Posterior vena cava (tissue), 2 donors: ENCODE measurements at regions of chr9 and their contacts with region 1.

Region 1: DNA sequence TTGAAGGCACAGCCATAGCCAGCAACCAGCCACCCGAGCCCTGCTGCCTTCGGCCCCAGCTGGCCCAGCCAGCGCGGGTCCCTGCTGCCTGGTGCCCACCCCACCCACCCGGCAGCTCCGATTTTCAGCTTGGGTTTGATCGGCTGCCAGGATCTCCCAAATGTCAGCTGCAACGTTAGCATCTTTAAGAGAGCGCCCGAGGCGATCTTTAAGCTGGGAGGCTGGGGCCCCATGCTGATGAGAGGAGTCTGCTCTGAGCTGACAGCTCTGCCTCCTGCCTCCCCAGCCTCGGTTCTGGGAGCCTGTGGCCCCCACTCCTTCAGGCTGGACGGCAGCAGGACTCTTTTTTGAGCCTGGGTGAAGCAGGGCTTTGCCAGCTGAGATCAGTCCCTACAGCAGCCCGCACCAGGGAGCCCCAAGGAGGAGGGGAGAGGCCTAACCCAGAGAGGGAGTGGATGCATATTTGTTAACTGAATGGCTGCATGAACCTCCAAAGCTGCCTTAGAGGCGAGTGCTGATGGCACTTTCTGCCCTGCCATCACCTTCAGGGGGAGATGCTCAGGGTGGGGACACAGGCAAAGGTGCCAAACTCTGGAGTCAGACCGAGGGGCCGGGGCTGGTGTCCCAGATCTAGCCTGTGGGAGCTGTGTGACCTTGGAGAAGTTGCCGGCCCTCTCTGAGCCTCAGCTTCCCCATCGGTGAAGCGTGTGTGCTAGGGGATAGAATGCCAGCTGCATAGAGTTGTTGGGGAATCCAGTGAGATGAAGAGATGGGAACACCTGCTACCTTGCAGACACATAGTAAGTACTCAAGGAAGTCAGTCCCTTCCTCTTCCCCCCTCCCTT is 165.5 kb downstream of the C9orf50 start:
- DNase-seq: no peak

Region 2: DNA sequence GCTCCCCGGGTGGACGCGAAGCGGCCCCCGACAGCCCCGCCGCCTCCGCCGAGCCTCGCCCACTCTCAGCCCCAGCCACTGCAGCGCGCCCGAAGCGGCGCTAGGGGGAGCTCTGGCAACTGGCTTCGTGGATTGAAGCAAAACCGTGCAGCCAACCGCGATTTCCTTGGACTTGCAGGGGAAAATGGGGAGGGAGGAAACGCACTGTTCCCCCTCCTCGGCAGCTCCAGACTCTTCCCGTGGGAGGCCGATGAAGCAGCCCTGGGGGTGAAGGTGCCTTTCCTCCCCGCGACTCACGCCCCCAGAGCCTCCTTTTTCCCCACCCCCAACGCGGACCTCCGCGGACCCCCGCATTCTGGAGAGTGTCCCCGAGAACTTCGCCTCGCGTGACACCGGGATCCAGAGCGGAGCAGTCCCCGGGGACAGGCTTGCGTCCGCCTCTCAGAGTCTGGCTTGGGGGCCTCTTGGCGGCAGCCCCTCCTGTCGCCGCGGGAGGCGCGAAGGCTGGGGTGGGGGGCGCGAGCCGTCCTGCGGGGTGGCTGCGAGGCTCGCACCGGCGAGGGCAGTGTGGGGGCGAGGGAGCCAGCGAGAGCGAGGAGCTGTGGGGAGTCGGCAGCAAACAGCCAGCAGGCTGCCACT is 281.2 kb before region 1 on chr9:
- intact Hi-C with region 1: no loop called
- DNase-seq: peak; percentile 98

Region 3: DNA sequence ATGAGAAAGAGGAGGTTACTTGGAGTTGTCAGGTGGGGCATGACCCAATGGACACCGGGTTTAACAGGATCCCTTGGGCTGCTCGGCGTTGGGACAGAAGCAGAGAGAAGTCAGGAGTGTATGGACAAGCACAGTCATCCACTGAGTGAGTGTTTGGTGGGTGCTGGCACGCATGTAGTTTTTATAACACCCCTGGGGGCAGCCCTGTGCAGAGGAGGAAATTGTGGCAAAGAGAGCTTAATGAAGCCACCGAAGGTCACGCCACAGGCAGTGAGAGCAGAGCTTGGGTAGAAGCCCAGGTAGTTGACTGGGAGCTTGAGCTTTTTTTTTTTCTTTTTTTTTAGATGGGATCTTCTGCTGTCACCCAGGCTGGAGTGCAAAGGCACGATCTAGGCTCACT is 234.1 kb before region 1 on chr9:
- intact Hi-C with region 1: loop called in 1 of 2 experiments (anchors 1 kb)
- DNase-seq: no peak

Region 4: GRCh38 chr9:129406278-129407225 is 48.8 kb before region 1 on chr9:
- intact Hi-C with region 1: no loop called
- DNase-seq: no peak

Region 5: GRCh38 chr9:130298663-130299279 is 843.4 kb after region 1 on chr9:
- intact Hi-C with region 1: no loop called
- DNase-seq: peak; percentile 69